Mammary epithelial cell (primary cell): ENCODE measurements at regions of chr15 and their contacts with region 1.

Region 1: DNA sequence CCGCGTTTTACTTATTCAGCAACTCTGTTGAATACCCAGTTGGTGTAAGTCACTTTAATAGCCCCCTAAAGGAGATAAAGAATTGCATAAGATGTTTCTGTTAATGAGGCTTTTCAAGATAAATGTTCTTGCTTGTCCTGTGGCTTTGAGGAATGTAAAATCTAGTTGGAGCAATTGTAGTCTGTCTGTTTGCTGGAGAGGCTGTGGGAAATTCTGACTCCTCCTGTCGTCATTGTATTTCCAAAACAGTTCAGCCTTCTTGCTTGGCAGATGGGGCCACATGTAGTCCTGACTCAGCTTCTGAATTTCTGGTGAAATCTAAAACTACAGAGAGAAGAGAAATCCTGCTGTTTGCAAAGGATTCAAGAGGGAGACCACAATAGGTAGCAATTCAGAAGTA is 114.4 kb downstream of the RYR3 start:
- DNase-seq: peak; percentile 95
- H3K4me3 ChIP-seq: no peak overlapping the region
- H3K27ac ChIP-seq: peak overlapping the region; percentile 18
- H3K4me1 ChIP-seq: peaks cover 9% of the 10 kb centered on the region
- H3K27me3 ChIP-seq: no peaks in the 10 kb centered on the region
- CTCF ChIP-seq: no peak

Region 2: GRCh38 chr15:32974691-32975090 is 450.5 kb before region 1 on chr15:
- CTCF ChIA-PET with region 1: no interaction called
- dilution Hi-C with region 1: no loop called
- in situ Hi-C with region 1: no loop called
- intact Hi-C with region 1: no loop called
- DNase-seq: no peak
- H3K4me3 ChIP-seq: no peak overlapping the region
- H3K27ac ChIP-seq: no peak overlapping the region
- H3K4me1 ChIP-seq: no peaks in the 10 kb centered on the region
- H3K27me3 ChIP-seq: no peaks in the 10 kb centered on the region
- CTCF ChIP-seq: no peak

Region 3: GRCh38 chr15:33242669-33243191 is 182.4 kb before region 1 on chr15:
- CTCF ChIA-PET with region 1: no interaction called
- dilution Hi-C with region 1: no loop called
- in situ Hi-C with region 1: no loop called
- intact Hi-C with region 1: loop called (anchors 5 kb)
- DNase-seq: peak; percentile 86
- H3K4me3 ChIP-seq: peak overlapping the region in 2 of 3 experiments; percentile 4 to 15
- H3K27ac ChIP-seq: peak overlapping the region; percentile 100
- H3K4me1 ChIP-seq: peaks cover 34% of the 10 kb centered on the region
- H3K27me3 ChIP-seq: no peaks in the 10 kb centered on the region
- CTCF ChIP-seq: peak; percentile 53 to 55

Region 4: GRCh38 chr15:33460149-33460805 is 35.1 kb after region 1 on chr15:
- CTCF ChIA-PET with region 1: no interaction called
- dilution Hi-C with region 1: loop called (anchors 5 kb)
- in situ Hi-C with region 1: no loop called
- intact Hi-C with region 1: loop called (anchors 2 kb)
- DNase-seq: peak; percentile 92
- H3K4me3 ChIP-seq: no peak overlapping the region
- H3K27ac ChIP-seq: peak overlapping the region; percentile 58
- H3K4me1 ChIP-seq: peaks cover 24% of the 10 kb centered on the region
- H3K27me3 ChIP-seq: no peaks in the 10 kb centered on the region
- CTCF ChIP-seq: no peak

Region 5: DNA sequence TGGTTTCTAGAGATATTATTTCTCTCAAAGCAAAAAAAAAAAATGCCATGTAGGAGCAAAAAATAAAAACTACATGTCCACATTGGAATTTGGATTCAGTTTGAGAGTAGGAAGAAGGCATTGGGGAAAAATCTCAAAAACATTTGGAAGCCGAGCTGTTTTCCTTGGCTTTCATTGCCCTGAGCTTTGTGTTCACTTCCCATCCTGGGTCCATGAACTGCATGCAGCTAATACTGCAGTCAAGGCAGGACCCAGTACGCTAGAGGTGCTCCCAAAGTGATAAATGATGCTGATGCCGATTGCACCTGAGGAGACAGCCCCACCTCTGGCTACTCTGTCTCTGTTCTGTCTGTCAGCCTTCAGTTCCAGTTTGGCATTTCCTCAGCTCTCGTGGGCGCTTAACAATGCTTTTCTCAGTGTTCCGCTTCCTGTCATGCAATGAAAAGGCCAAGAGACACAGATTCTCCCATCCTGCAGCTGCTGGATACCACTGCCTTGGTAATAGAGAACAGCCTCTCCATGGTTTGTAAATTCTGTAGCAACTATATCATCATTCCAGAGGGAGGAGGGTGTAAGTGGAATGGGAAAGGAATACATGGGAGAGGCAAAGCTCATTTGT is 67.4 kb after region 1 on chr15:
- CTCF ChIA-PET with region 1: no interaction called
- dilution Hi-C with region 1: no loop called
- in situ Hi-C with region 1: no loop called
- intact Hi-C with region 1: no loop called
- DNase-seq: no peak
- H3K4me3 ChIP-seq: no peak overlapping the region
- H3K27ac ChIP-seq: no peak overlapping the region
- H3K4me1 ChIP-seq: peaks cover 1% of the 10 kb centered on the region
- H3K27me3 ChIP-seq: peaks cover 2% of the 10 kb centered on the region
- CTCF ChIP-seq: no peak